A673 (cell line): ENCODE measurements at regions of chr17 and their contacts with region 1.

Region 1: DNA sequence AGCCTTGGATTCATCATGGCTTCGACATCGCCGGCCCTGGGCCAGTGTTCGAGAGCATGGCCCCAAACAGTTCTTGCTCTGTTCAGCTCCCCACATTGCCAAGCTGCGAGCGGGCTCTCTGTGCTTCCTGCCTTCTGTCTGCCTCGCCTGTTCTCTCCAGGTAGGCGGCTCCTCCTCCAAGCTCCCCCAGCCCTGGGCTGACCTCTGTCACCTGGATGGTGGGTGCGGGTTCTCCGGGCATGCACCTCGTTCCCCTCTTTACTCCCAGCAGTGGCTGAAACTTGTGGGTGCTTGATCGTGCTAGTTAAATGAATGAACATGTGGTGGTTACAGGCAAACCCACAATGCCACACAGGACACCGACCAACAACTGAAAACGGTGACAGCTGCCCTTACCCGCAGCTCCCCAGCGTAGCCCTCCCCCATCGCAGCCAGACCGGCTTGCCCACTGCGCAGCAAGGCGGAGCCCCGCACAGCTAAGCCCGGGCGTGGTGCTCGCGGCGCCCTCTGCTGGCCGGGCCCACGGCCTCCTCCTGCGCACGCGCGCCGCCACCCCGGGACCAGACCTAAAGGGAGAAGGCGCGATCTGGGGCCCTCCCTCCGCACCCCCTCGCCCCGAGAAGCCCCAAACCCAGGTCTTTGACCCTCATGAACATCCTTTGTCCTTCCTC is 23.0 kb upstream of the EIF1 start:
- DNase-seq: peak; percentile 81
- H3K4me3 ChIP-seq: peak overlapping the region; percentile 43
- H3K27ac ChIP-seq: no peak overlapping the region
- H3K4me1 ChIP-seq: peaks cover 5% of the 10 kb centered on the region
- H3K27me3 ChIP-seq: no peaks in the 10 kb centered on the region
- CTCF ChIP-seq: peak; percentile 77

Region 2: GRCh38 chr17:40803617-40804082 is 862.1 kb before region 1 on chr17:
- CTCF ChIA-PET with region 1: interaction called, 4 read pairs
- POLR2A ChIA-PET with region 1: no interaction called
- intact Hi-C with region 1: loop called (anchors 2 kb)
- DNase-seq: peak; percentile 80
- H3K4me3 ChIP-seq: no peak overlapping the region
- H3K27ac ChIP-seq: no peak overlapping the region
- H3K4me1 ChIP-seq: no peaks in the 10 kb centered on the region
- H3K27me3 ChIP-seq: no peaks in the 10 kb centered on the region
- CTCF ChIP-seq: peak; percentile 77

Region 3: DNA sequence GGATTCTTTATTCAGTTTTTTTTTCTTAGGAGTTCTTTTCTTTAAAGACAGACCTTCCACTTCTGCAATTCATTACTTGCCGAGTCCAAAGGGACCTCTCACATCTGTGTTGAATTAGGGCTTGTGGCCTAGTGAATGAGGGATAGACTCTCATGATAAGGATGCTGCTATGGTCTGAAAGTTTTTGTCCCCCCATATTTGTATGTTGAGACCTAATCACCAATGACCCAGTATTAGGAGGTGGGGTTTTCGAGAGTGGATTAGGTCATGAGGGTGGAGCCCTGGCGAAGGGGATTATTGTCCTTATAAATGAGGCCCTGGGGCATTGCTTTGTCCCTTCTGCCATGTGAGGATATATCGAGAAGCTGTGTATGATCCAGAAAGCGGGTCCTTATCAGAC is 808.2 kb before region 1 on chr17:
- CTCF ChIA-PET with region 1: interaction called, 12 read pairs
- POLR2A ChIA-PET with region 1: no interaction called
- intact Hi-C with region 1: loop called (anchors 5 kb)
- DNase-seq: peak; percentile 51
- H3K4me3 ChIP-seq: no peak overlapping the region
- H3K27ac ChIP-seq: peak overlapping the region; percentile 60
- H3K4me1 ChIP-seq: peaks cover 11% of the 10 kb centered on the region
- H3K27me3 ChIP-seq: no peaks in the 10 kb centered on the region
- CTCF ChIP-seq: no peak

Region 4: DNA sequence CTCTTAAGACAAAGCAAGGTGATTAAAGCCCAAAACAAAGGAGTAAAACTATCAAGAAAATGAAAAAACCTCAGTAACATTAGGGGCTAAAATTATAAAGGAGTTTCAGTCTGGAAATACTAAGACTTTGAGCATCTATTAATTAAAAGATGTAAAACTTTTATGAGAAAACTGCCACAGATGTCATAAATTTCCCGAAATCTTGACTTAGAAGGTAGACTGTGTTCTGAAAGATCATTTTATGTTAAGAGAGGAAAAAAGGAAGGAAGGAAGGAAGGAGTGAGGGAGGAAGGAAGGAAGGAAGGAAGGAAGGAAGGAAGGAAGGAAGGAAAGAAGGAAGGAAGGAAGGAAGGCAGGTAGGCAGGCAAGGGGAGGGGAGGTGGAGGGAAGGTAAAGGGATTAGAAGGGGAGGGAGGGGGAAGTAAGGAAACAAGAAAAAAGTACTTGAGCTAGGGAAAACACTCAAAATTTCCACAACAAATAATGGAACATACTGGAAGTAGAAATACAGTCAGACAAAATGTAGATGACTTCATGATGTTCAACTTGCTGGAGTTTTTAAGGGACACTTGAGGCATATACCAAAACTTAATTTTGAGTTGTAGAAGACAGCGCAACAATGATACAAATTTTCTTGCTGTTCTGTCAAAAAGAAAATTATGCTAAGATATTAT is 518.0 kb before region 1 on chr17:
- CTCF ChIA-PET with region 1: no interaction called
- POLR2A ChIA-PET with region 1: no interaction called
- intact Hi-C with region 1: loop called (anchors 5 kb)
- DNase-seq: peak; percentile 72
- H3K4me3 ChIP-seq: no peak overlapping the region
- H3K27ac ChIP-seq: peak overlapping the region; percentile 96
- H3K4me1 ChIP-seq: peaks cover 31% of the 10 kb centered on the region
- H3K27me3 ChIP-seq: no peaks in the 10 kb centered on the region
- CTCF ChIP-seq: no peak

Region 5: GRCh38 chr17:41548844-41549595 is 116.7 kb before region 1 on chr17:
- CTCF ChIA-PET with region 1: interaction called, 34 read pairs
- POLR2A ChIA-PET with region 1: no interaction called
- intact Hi-C with region 1: loop called (anchors 1 kb)
- DNase-seq: peak; percentile 74
- H3K4me3 ChIP-seq: no peak overlapping the region
- H3K27ac ChIP-seq: peak overlapping the region; percentile 50
- H3K4me1 ChIP-seq: no peaks in the 10 kb centered on the region
- H3K27me3 ChIP-seq: no peaks in the 10 kb centered on the region
- CTCF ChIP-seq: peak; percentile 74

Region 6: GRCh38 chr17:41738077-41738735 is 72.5 kb after region 1 on chr17:
- CTCF ChIA-PET with region 1: no interaction called
- POLR2A ChIA-PET with region 1: no interaction called
- intact Hi-C with region 1: no loop called
- DNase-seq: peak; percentile 72
- H3K4me3 ChIP-seq: no peak overlapping the region
- H3K27ac ChIP-seq: no peak overlapping the region
- H3K4me1 ChIP-seq: no peaks in the 10 kb centered on the region
- H3K27me3 ChIP-seq: peaks cover 26% of the 10 kb centered on the region
- CTCF ChIP-seq: peak; percentile 78